ENCODE measurements at regions of chr3 and their contacts with region 1.

Region 1: DNA sequence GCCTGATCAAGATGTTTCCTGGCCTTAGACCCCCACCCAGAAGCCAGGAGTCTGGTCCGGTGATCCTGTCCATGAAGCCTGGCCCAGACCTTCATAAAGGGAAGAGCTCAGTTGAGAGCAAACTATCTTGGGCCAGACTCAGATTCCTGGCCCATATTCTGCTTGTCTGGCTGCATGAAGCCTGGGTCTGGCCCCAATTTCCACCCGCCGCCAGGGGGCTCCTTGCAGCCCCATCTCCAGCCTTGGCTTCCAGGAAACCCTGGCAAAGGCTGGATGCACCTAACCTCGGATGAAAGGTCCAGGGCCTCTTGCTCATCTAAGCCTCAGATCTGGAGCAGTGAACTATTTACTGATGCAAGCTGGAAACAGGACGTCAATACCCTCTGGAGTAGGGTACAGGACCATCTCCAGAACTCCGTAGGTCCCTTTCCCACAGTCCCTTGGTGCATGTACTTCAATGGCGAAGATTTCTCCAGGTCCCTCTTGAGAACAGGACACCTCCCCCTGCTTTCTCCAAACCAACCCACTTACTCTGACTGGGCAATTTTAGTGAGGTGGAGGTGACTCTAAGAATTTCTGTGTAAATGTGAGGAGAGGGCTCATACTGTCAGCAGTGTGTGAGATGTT is 5.6 kb downstream of the FOXL2 start:
- DNase-seq: peak; percentile 57 to 62
- ATAC-seq: peak; percentile 51 to 83; a peak in 5 of 6 replicates
- H3K4me3 ChIP-seq: no peak overlapping the region
- H3K27ac ChIP-seq: no peak overlapping the region
- H3K4me1 ChIP-seq: no peaks in the 10 kb centered on the region; the same call in 2 of the 3 replicates
- CTCF ChIP-seq: peak; percentile 55
- EP300 ChIP-seq: no peak
- POLR2A ChIP-seq: no peak
- RAD21 ChIP-seq: peak; percentile 44 to 50

Region 2: DNA sequence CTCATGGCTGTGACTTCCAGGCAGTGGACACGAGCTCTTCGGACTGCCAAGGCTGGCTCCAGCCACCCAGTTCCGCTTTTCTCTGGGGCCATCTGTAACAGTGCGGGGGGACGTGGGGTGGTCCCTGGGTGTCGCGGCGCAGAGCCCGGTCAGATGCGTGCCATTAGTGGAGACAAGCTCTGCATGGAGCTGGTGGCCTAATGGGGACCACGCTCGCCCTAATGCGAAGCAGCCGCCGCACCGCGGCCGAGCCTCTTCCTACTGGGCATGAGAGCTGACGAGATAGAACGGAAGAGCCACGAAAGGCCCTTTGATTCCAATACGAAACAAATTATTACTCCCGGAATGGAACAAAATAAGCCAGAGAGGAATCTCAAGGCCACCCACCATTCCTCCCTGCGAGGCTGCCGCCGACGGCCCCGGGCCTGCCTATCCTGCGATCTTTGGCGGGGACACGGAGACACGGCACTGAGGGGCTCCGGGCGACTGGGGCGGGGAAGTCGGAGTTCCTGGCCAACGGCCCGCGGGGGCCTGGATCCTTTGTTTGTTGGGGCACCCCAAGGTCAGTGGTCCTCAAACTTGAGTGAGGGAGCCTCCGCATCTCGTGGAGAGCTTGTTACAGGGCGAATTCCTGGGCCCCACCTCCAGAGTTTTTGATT is 12.5 kb before region 1 on chr3:
- CTCF ChIA-PET with region 1: interaction called, 82 read pairs
- POLR2A ChIA-PET with region 1: no interaction called
- DNase-seq: no peak
- ATAC-seq: no peak
- H3K4me3 ChIP-seq: no peak overlapping the region
- H3K27ac ChIP-seq: no peak overlapping the region
- H3K4me1 ChIP-seq: no peaks in the 10 kb centered on the region
- CTCF ChIP-seq: no peak
- EP300 ChIP-seq: no peak
- POLR2A ChIP-seq: no peak
- RAD21 ChIP-seq: no peak

Region 3: GRCh38 chr3:138974462-138974861 is 33.1 kb after region 1 on chr3:
- CTCF ChIA-PET with region 1: interaction called, 11 read pairs
- POLR2A ChIA-PET with region 1: no interaction called
- DNase-seq: no peak
- ATAC-seq: peak in 1 of 2 experiments; percentile 53; a peak in 2 of 6 replicates
- H3K4me3 ChIP-seq: no peak overlapping the region
- H3K27ac ChIP-seq: no peak overlapping the region
- H3K4me1 ChIP-seq: peaks cover 6% of the 10 kb centered on the region; the same call in 2 of the 3 replicates
- CTCF ChIP-seq: no peak
- EP300 ChIP-seq: no peak
- POLR2A ChIP-seq: no peak
- RAD21 ChIP-seq: no peak

Region 4: GRCh38 chr3:139074565-139075115 is 133.3 kb after region 1 on chr3:
- CTCF ChIA-PET with region 1: no interaction called
- POLR2A ChIA-PET with region 1: no interaction called
- DNase-seq: no peak
- ATAC-seq: no peak
- H3K4me3 ChIP-seq: no peak overlapping the region
- H3K27ac ChIP-seq: no peak overlapping the region
- H3K4me1 ChIP-seq: no peaks in the 10 kb centered on the region
- CTCF ChIP-seq: no peak
- EP300 ChIP-seq: no peak
- POLR2A ChIP-seq: no peak
- RAD21 ChIP-seq: no peak